ENCODE measurements at regions of chr20 and their contacts with region 1.

Region 1: DNA sequence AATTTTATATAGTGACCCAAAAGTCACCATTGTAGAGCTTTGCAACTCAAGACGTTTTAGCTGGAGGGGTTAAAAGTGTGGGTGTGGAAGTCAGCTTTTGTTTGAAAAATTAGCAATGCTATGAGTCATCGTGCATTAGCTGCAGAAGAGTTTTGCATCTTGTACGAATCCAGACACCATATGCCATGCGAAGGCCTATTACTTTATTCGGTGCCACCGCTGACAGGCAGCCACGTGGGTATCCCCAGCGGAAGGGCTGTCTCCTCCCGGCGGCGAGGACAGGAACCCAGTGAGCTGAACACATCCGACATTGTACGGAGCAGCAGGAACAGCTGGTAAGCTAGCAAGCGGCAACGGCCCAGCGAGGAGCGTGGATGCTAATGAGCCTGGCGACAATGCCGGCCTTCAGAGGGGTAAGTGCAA is 84.4 kb downstream of the INSM1 start:
- DNase-seq: no peak
- H3K4me3 ChIP-seq: peak overlapping the region in 1 of 3 donors; percentile 32
- H3K27ac ChIP-seq: no peak overlapping the region
- H3K4me1 ChIP-seq: no peaks in the 10 kb centered on the region
- H3K27me3 ChIP-seq: no peaks in the 10 kb centered on the region
- CTCF ChIP-seq: no peak
- POLR2A ChIP-seq: no peak

Region 2: GRCh38 chr20:20143646-20144045 is 308.6 kb before region 1 on chr20:
- intact Hi-C with region 1: loop called (anchors 5 kb)
- DNase-seq: no peak
- H3K4me3 ChIP-seq: no peak overlapping the region
- H3K27ac ChIP-seq: no peak overlapping the region
- H3K4me1 ChIP-seq: no peaks in the 10 kb centered on the region
- H3K27me3 ChIP-seq: no peaks in the 10 kb centered on the region
- CTCF ChIP-seq: no peak
- POLR2A ChIP-seq: no peak

Region 3: DNA sequence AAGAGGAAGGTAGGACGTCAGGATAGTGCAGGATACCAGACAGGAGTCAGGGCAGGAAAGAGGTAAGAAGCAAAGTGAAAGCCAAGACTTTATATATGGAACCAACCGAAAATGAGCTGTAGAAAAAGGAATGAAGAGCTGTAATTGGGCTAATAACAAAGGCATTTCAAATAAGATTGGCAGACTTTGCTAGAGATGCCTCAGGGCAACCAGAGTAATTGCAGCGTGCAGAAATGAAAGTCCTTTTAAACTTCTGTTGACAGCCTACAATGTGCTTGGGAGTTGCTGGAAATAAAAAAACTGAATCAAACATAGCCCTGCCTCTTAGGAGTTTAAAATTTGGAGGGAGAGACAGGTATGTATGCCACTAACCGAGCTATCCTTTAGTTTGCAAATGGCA is 1001.4 kb after region 1 on chr20:
- intact Hi-C with region 1: no loop called
- DNase-seq: no peak
- H3K4me3 ChIP-seq: no peak overlapping the region
- H3K27ac ChIP-seq: no peak overlapping the region
- H3K4me1 ChIP-seq: no peaks in the 10 kb centered on the region
- H3K27me3 ChIP-seq: no peaks in the 10 kb centered on the region
- CTCF ChIP-seq: no peak
- POLR2A ChIP-seq: no peak

Measured in breast epithelium (tissue), 4 donors.